Activated T-helper 1 cell treated with anti-CD3 and anti-CD28 coated beads, Interleukin-12 subunit alpha, Interleukin-12 subunit beta, Interleukin-2, Interleukin-4 antibody, amounts not matched to agents 30 ng/mL and 10 ng/mL and 1 ng/mL, durations not matched to agents 14 hours and 24 hours and 36 hours (primary cell): ENCODE measurements at regions of chr1 and their contacts with region 1.

Region 1: DNA sequence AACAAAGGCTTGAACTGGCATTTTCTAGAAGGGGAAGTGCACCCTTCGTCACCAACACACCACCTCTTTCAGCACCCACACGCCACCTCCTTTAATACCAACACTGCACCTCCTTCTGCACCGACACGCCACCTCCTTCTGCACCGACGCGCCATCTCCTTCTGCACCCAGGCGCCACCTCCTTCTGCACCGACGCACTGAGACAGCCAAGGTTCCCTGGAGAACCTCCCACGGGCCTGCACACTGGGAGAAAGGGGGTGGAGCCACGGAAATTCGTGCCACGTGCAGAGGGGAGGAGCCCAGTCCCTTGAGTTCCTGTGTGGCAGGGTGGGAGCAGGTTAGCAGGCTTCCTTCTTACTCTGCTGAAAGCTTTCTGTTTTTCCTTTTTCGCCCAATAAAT is 327.9 kb upstream of the C1orf174 start:
- DNase-seq: no peak
- H3K4me3 Mint-ChIP-seq: no peak overlapping the region
- H3K27ac Mint-ChIP-seq: no peak overlapping the region
- H3K4me1 Mint-ChIP-seq: no peaks in the 10 kb centered on the region
- H3K27me3 Mint-ChIP-seq: peaks cover 2% of the 10 kb centered on the region

Region 2: DNA sequence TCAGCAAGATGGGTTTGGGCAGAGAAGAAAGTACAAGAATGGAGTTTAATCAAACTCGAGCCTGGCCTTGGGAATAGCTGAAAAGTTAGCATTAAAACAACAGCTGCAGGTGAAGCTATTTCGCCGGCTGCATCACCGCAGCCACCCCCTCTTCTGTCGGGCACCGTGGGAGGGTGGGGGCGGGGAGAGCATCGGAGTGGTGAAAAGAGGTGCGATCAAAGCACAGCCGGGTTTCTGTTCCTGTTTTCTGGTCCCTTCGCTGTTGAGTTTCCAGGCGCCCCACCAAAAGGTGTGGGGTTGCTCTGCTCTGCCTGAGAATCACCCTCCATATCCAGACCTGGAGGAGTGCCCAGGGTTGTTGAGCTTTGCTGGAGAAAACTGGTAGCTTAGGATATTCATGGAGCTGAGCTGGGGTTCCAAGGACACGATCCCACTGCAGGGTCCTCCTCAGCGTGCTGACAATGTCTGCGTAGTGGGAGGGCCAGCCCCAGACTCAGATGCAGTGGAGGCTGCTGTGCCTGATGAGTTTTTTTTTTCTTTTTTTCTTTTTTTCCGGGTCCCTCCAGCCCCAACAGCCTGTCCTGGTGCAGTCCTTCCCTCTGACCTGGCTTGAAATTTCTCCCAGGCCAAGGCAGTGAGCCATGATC is 200.4 kb before region 1 on chr1:
- intact Hi-C with region 1: no loop called
- DNase-seq: no peak
- H3K4me3 Mint-ChIP-seq: no peak overlapping the region
- H3K27ac Mint-ChIP-seq: no peak overlapping the region
- H3K4me1 Mint-ChIP-seq: no peaks in the 10 kb centered on the region
- H3K27me3 Mint-ChIP-seq: peaks cover 4% of the 10 kb centered on the region

Region 3: GRCh38 chr1:4161366-4162006 is 66.5 kb before region 1 on chr1:
- intact Hi-C with region 1: no loop called
- DNase-seq: no peak
- H3K4me3 Mint-ChIP-seq: no peak overlapping the region
- H3K27ac Mint-ChIP-seq: no peak overlapping the region
- H3K4me1 Mint-ChIP-seq: no peaks in the 10 kb centered on the region
- H3K27me3 Mint-ChIP-seq: peaks cover 5% of the 10 kb centered on the region

Region 4: DNA sequence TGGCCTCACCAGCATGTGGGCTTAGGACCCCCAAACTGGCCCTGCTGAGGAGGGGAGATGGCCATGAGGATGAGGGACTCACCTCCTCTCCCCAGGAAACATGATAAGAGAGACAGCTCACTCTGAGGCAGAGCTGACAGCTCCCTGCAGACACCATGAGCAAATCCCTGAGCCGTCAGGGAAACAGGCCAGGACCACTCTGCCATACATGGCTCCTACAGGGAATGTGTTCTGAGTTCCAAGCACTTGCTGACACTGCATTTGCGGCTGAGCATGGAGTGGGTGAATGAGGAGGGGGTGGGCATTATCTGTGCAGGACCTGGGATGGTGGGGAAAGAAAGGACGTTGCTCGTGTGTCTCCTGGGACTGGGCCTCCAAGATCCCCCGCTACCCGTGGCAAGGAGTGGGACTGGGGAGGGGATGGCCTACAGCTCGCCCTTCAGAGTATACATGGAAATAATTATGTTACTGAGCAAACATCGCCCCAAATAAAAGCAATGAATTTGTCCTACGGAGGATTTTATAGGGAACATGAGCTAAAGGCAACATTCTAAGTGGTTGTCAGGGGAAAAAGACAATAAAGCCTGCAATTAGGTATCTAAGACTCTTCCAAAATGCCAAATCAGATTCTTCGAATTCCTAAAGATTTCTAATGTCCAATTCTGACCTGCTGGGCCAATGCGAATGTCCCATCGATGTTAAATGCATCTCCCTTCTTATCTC is 70.5 kb after region 1 on chr1:
- intact Hi-C with region 1: loop called (anchors 10 kb)
- DNase-seq: no peak
- H3K4me3 Mint-ChIP-seq: no peak overlapping the region
- H3K27ac Mint-ChIP-seq: no peak overlapping the region
- H3K4me1 Mint-ChIP-seq: no peaks in the 10 kb centered on the region
- H3K27me3 Mint-ChIP-seq: no peaks in the 10 kb centered on the region

Region 5: GRCh38 chr1:5099558-5100252 is 871.7 kb after region 1 on chr1:
- intact Hi-C with region 1: no loop called
- DNase-seq: no peak
- H3K4me3 Mint-ChIP-seq: no peak overlapping the region
- H3K27ac Mint-ChIP-seq: no peak overlapping the region
- H3K4me1 Mint-ChIP-seq: no peaks in the 10 kb centered on the region
- H3K27me3 Mint-ChIP-seq: no peaks in the 10 kb centered on the region